Activated B cell treated with CpG ODN at 0.5 μM for 24 hours (primary cell): ENCODE measurements at regions of chr13 and their contacts with region 1.

Region 1: DNA sequence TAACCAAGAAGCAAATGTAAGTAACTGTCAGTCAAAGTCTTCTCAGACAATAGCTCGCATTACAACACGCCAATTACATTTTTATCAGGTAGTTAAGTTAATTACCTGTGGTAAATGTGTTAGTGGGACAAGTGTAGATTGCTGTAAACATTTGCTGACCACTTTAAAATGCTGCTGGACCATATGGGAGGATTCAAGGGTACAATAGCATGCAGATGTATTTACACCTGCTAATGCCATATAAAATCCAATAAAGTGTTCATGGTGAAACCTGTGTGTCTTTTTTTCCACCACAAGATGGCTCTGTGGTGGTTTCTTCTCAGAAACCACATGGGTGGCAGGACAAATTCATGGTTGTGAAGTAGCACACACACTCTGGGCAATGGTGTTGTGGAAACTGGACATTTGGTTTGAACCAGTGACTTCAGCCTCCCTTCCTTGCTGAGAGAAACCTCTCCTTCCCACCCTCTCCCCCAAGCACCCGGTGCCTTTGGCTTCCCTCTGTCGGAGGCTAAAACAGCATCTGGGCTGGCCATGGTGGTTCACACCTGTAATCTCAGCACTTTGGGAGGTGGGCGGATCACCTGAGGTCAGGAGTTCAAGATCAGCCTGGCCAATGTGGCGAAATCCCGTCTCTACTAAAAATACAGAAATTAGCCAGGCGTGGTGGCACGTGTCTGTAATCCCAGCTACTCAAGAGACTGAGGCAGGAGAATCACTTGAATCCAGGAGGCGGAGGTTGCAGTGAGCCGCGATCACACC is 18.1 kb upstream of the GTF3A start:
- DNase-seq: no peak
- ATAC-seq: peak; percentile 54
- H3K4me3 Mint-ChIP-seq: no peak overlapping the region
- H3K27ac Mint-ChIP-seq: no peak overlapping the region
- H3K4me1 Mint-ChIP-seq: peaks cover 9% of the 10 kb centered on the region
- H3K27me3 Mint-ChIP-seq: peaks cover 8% of the 10 kb centered on the region
- CTCF ChIP-seq: no peak

Region 2: GRCh38 chr13:27533155-27533643 is 126.8 kb after region 1 on chr13:
- CTCF ChIA-PET with region 1: interaction called, 4 read pairs
- POLR2A ChIA-PET with region 1: no interaction called
- intact Hi-C with region 1: loop called (anchors 1 kb)
- DNase-seq: peak; percentile 39
- ATAC-seq: peak; percentile 72
- H3K4me3 Mint-ChIP-seq: peak overlapping the region; percentile 36
- H3K27ac Mint-ChIP-seq: no peak overlapping the region
- H3K4me1 Mint-ChIP-seq: peaks cover 23% of the 10 kb centered on the region
- H3K27me3 Mint-ChIP-seq: no peaks in the 10 kb centered on the region
- CTCF ChIP-seq: peak; percentile 53

Region 3: DNA sequence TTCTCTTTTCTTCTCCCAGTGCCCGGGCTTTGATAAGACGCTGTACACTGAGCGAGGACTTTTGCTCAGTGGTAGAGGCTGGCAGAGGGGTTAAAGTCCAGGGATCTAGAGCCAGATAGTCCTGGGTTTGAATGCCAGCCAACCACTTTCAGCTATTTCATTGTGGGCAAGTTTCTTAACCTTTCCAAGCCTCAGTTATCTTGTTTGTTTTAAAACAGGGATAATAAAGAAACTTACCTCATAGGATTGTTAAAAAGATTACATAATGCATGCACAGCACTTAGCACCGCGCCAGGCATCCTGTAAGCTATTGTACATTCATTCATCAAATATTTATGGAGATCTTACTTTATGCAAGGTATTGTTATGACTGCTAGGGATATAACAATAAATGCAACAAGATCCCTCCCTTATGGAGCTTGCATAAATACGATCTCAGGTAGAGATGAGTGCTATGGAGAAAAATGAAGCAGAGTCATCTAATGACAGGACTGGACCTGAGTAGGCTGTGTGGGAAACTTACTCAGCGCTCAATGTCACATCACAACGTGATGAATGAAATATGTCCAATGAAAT is 143.1 kb after region 1 on chr13:
- CTCF ChIA-PET with region 1: no interaction called
- POLR2A ChIA-PET with region 1: no interaction called
- intact Hi-C with region 1: loop called (anchors 5 kb)
- DNase-seq: no peak
- ATAC-seq: no peak
- H3K4me3 Mint-ChIP-seq: no peak overlapping the region
- H3K27ac Mint-ChIP-seq: no peak overlapping the region
- H3K4me1 Mint-ChIP-seq: peaks cover 2% of the 10 kb centered on the region
- H3K27me3 Mint-ChIP-seq: no peaks in the 10 kb centered on the region
- CTCF ChIP-seq: no peak

Region 4: GRCh38 chr13:27712421-27712820 is 306.1 kb after region 1 on chr13:
- CTCF ChIA-PET with region 1: interaction called, 5 read pairs
- POLR2A ChIA-PET with region 1: no interaction called
- intact Hi-C with region 1: loop called (anchors 1 kb)
- DNase-seq: no peak
- ATAC-seq: no peak
- H3K4me3 Mint-ChIP-seq: no peak overlapping the region
- H3K27ac Mint-ChIP-seq: no peak overlapping the region
- H3K4me1 Mint-ChIP-seq: no peaks in the 10 kb centered on the region
- H3K27me3 Mint-ChIP-seq: peaks cover 13% of the 10 kb centered on the region
- CTCF ChIP-seq: no peak